Activated naive CD4-positive, alpha-beta T cell treated with anti-CD3 and anti-CD28 coated beads for 36 hours (primary cell): ENCODE measurements at regions of chr17 and their contacts with region 1.

Region 1: GRCh38 chr17:14300575-14301278 is at the start of gene HS3ST3B1:
- DNase-seq: peak; percentile 100
- H3K4me3 Mint-ChIP-seq: peak within 1 kb of the TSS; percentile 89
- H3K27ac Mint-ChIP-seq: peak within 1 kb of the TSS; percentile 95
- H3K4me1 Mint-ChIP-seq: peaks cover 38% of the 10 kb centered on the region
- H3K27me3 Mint-ChIP-seq: peaks cover 30% of the 10 kb centered on the region
- total RNA-seq, gene HS3ST3B1: 23.2 to 26.0 TPM

Region 2: DNA sequence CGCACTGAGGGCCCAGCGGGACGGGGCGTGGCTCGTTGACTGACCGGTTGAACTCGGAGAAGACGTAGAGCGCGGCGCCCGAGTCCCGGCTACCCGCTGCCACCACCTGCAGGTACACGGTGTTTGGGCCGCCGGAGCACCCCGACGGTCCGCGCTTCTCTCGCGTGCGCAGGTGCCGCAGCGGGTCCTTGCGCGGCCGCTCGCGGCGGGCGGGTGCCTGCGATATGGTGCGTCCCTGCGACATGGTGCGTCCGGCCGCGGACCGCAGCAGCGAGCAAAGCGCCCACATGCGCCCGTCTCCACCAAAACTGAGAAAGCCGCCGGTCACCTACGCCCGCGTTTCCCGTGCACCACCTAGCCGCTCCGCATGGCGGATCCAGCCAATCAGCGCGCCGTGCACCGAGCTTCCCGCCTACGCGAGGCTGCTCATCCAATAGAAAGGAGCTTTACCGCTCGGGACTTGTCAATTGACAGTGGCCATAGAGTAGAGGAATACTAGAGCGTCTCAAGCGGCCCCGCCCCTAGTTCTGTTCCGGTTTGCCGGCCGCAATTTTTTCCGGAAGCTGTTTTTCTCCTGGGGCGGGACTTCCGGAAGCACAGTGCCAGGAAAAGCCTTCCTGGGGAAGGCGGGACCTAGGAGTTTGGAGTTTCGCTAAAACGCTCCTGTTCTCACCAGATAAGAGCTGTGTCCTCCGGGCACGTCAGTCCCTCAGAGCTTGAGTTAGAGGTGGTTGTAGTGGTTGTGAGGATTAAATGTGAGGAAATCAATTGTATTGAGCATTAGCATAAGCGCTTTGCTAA is 1282.9 kb before region 1 on chr17 and contains the start of gene ELAC2:
- CTCF ChIA-PET with region 1: no interaction called
- intact Hi-C with region 1: loop called (anchors 1 kb)
- DNase-seq: peak; percentile 97
- H3K4me3 Mint-ChIP-seq: peak within 1 kb of the TSS; percentile 93
- H3K27ac Mint-ChIP-seq: peak within 1 kb of the TSS; percentile 97
- H3K4me1 Mint-ChIP-seq: peaks cover 27% of the 10 kb centered on the region
- H3K27me3 Mint-ChIP-seq: no peaks in the 10 kb centered on the region
- total RNA-seq, gene ELAC2: 74.1 to 75.9 TPM

Region 3: DNA sequence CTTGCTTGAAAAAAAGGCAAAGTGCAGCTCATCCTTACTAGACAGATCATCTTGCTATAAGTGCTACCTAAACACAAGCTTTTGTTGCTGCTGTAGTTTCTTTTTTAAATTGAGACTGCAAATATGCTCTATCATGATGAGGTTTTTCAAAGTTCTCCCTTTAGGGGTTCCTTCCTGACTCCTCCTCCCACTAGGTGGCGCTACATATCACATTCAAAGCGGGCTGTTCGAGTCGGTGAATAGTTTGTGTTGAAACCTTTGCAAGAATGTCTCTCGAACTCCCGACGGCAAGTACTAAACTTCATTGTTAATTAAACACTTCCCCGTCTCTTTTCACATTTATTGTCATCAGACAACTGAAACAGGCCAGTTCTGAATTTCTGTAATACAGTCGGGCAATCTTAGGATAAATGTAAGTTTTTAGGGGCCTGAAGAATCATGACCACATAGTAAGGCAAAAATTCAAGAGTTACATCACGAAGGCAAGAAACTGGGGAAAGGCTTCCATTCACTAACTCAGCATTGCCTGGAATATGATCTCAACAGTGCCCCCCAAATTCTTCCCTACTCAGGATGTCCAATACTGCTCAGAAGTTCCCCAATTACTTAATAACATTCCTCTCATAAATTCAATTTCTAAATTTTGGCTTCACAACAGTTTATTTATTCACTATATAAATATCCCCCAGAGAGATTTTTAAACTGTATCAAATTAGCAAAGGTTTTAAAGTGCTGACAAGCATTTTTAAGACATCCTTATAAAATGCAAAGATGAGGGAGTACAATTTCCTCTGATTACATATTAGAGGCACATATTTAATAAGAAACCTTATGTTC is 705.7 kb before region 1 on chr17:
- CTCF ChIA-PET with region 1: interaction called, 5 read pairs
- intact Hi-C with region 1: loop called (anchors 1 kb)
- DNase-seq: peak; percentile 89
- H3K4me3 Mint-ChIP-seq: no peak overlapping the region
- H3K27ac Mint-ChIP-seq: no peak overlapping the region
- H3K4me1 Mint-ChIP-seq: peaks cover 2% of the 10 kb centered on the region
- H3K27me3 Mint-ChIP-seq: peaks cover 21% of the 10 kb centered on the region

Region 4: DNA sequence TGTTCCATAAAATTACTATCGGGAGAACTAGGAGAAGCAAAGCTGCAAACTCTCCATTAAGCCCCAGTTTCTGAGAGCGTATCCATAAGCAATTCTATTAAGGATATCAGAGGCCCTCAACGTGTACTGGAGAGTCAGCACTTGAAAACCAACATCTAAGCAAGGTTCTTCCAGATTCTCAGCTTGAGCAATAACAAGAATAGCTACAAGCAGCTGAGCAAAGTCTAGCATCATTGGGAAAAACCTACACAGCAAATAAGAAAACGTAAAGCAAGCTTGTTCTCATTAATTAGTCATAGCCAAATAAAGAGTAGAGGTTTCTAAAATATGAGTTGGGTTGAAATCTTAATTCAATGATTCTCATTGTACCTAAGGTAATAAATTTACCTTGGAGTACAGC is 258.3 kb before region 1 on chr17:
- CTCF ChIA-PET with region 1: no interaction called
- intact Hi-C with region 1: loop called (anchors 5 kb)
- DNase-seq: no peak
- H3K4me3 Mint-ChIP-seq: no peak overlapping the region
- H3K27ac Mint-ChIP-seq: no peak overlapping the region
- H3K4me1 Mint-ChIP-seq: peaks cover 35% of the 10 kb centered on the region
- H3K27me3 Mint-ChIP-seq: no peaks in the 10 kb centered on the region

Region 5: DNA sequence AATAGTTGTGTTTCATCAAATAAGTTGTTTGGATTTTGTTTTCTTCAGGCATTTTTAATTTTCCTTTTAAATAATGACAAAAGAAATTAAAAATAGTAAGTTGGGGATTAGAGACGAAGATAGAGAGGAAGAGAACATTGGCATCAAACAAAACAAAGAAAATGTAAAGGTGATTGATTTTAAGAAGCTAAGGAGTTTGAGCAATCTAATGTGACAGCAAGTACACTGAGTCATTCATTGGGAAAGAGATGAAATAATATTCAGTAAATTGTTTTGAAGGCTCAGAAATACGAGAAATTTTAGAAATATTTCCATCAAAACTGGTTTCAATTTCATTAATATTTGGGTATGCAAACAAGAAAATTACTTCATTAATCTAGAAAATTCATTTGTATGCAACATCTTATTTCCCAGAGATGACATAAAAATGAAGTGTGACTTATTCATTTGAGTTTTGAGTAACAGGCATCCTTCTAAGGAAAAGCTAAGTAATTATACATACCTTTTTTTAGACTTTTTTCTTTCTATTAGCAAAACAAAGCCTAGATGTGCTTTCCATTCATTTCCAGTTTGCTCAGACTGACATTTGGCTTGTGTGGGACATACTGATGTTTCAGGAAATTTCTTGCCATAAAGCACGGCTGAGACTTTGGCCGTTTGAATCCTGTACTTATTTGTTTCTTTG is 164.7 kb before region 1 on chr17:
- CTCF ChIA-PET with region 1: interaction called, 6 read pairs
- intact Hi-C with region 1: loop called (anchors 1 kb)
- DNase-seq: no peak
- H3K4me3 Mint-ChIP-seq: peak overlapping the region; percentile 38
- H3K27ac Mint-ChIP-seq: peak overlapping the region; percentile 91
- H3K4me1 Mint-ChIP-seq: peaks cover 31% of the 10 kb centered on the region
- H3K27me3 Mint-ChIP-seq: no peaks in the 10 kb centered on the region

Region 6: GRCh38 chr17:14261406-14261805 is 39.3 kb before region 1 on chr17:
- CTCF ChIA-PET with region 1: no interaction called
- intact Hi-C with region 1: no loop called
- DNase-seq: no peak
- H3K4me3 Mint-ChIP-seq: no peak overlapping the region
- H3K27ac Mint-ChIP-seq: no peak overlapping the region
- H3K4me1 Mint-ChIP-seq: no peaks in the 10 kb centered on the region
- H3K27me3 Mint-ChIP-seq: no peaks in the 10 kb centered on the region

Region 7: GRCh38 chr17:14409292-14409691 is 108.6 kb after region 1 on chr17:
- CTCF ChIA-PET with region 1: interaction called, 7 read pairs
- intact Hi-C with region 1: loop called (anchors 2 kb)
- DNase-seq: no peak
- H3K4me3 Mint-ChIP-seq: no peak overlapping the region
- H3K27ac Mint-ChIP-seq: no peak overlapping the region
- H3K4me1 Mint-ChIP-seq: peaks cover 12% of the 10 kb centered on the region
- H3K27me3 Mint-ChIP-seq: no peaks in the 10 kb centered on the region

Region 8: DNA sequence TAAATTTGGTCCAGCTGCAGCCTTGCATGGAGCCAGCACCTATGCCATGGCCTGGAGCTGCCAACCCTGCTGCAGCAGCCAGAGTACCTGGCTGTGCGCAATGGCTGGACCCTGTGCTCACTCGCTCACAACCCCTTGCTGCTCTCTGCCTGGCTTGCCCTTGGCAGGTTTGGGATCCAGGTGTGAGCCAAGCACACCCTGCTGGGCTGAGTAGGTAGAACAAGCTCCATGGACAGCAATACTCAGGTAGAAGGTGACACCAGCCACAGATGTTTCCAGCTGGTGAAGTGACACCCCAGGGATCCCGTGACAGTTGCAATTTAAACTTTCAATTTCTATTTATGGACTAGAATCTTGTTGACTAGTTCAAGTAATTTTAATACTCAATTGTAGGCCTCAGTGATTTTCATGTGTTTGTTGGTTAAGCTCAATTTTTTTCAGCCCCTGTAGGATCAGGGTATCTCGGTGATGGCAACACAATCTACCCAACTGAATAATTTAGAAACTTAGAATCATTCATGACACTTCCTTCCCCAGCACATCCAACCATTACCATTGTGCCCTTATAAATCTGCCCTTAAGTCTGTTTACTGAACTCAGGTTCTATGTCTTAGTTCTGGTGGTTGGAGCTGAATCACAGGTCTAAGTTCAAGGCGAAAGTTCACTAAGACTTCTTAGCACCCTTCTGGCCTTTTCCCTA is 484.4 kb after region 1 on chr17:
- CTCF ChIA-PET with region 1: interaction called, 3 read pairs
- intact Hi-C with region 1: loop called (anchors 10 kb)
- DNase-seq: peak; percentile 47
- H3K4me3 Mint-ChIP-seq: no peak overlapping the region
- H3K27ac Mint-ChIP-seq: no peak overlapping the region
- H3K4me1 Mint-ChIP-seq: no peaks in the 10 kb centered on the region
- H3K27me3 Mint-ChIP-seq: peaks cover 7% of the 10 kb centered on the region